ENCODE measurements at regions of chr1 and their contacts with region 1.

Region 1: DNA sequence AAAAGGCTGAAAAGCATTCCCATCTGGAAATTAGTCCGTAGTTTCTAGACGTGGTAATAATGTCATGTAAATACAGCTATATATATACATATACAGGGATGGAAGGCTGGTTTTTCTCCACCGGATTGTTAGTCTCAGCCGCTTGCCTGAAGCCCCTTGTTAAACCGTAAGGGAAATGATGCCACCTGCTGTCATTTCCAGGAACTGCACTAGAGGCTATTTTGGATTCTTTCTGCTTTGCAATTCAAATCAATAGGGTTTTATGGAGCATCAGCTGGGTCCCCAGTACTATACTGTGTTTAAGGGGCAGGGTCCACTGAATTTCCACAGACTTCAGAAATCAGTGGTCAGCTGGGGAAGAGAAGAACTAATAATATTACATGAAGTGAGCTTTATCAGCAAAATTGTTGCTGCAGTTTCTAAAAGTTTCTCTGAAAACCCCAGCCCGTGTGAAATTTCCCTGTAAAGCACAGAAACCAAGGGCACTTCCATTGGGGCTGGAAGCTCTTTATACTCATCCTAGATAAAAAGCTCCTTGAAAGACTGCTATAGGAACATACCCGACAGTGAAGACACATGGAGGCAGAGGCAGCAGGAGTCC is 33.8 kb upstream of the MPZL1 start:
- DNase-seq: no peak
- ATAC-seq: peak; percentile 83
- H3K4me3 Mint-ChIP-seq: no peak overlapping the region
- H3K27ac Mint-ChIP-seq: peak overlapping the region; percentile 46
- H3K4me1 Mint-ChIP-seq: peaks cover 45% of the 10 kb centered on the region
- H3K27me3 Mint-ChIP-seq: no peaks in the 10 kb centered on the region
- CTCF ChIP-seq: peak; percentile 81

Region 2: DNA sequence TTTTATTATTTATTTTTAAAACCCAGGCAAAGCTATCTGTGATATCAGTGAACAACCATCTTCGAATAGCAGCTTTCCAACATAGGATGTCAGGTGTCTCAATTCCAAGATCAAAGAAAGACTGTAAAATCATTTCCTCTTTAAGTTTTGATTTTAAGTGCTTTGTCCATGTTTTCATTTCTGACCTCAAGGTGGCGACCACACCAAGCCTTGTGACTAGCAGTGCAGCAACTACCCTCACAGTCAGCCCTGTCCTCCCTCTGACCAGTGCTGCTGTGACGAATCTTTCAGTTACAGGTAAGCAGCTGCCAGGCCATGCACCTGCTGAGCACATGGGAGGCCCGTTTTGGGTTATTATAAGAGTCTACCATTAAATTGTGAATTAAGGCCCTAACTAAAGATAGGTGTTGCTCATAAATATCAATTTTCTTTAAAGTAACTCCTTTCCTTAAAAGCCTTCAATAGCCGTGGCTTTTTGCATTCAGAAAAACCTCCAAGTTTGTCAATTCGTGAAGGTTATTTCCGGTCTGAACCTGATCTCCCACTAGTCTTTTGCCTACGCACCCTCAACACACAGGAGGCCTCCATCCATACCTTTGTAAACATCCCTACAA is 286.7 kb before region 1 on chr1:
- CTCF ChIA-PET with region 1: interaction called, 5 read pairs
- POLR2A ChIA-PET with region 1: no interaction called
- intact Hi-C with region 1: loop called (anchors 2 kb)
- DNase-seq: peak; percentile 26
- ATAC-seq: peak; percentile 68
- H3K4me3 Mint-ChIP-seq: no peak overlapping the region
- H3K27ac Mint-ChIP-seq: no peak overlapping the region
- H3K4me1 Mint-ChIP-seq: no peaks in the 10 kb centered on the region
- H3K27me3 Mint-ChIP-seq: no peaks in the 10 kb centered on the region
- CTCF ChIP-seq: peak; percentile 12

Region 3: DNA sequence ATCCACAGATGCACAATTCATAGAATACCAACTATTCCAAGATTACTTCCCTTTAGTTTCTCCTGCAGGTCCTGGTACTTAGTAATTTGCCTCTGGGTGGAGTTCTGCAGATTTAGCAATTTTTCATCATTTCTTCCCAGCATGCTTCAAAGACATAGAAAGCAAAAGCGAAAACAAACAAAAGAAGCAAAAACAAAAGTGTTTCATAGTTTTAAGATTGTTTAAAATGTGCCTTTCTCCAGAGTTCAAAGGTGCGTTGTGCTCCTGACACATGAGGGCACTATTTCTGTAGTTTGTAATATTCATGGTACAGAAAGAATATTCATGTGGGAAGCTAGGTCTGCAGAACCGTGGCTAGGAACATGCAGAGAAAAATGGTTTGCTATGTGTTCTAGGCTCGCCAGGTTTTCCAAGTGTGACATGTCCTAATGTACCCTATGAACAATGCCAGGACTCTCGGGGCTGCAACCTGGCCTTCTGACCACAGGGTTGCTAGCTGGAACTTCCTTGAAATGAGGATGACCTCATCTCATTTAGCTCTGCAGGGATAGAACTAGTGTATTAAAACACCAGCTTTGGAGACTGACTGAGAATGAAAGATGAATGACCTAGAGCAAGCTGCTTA is 88.0 kb before region 1 on chr1:
- CTCF ChIA-PET with region 1: interaction called, 197 read pairs
- POLR2A ChIA-PET with region 1: interaction called, 44 read pairs
- intact Hi-C with region 1: loop called (anchors 1 kb)
- DNase-seq: no peak
- ATAC-seq: peak; percentile 66
- H3K4me3 Mint-ChIP-seq: peak overlapping the region; percentile 48
- H3K27ac Mint-ChIP-seq: peak overlapping the region; percentile 7
- H3K4me1 Mint-ChIP-seq: peaks cover 43% of the 10 kb centered on the region
- H3K27me3 Mint-ChIP-seq: no peaks in the 10 kb centered on the region
- CTCF ChIP-seq: peak; percentile 56

Region 4: DNA sequence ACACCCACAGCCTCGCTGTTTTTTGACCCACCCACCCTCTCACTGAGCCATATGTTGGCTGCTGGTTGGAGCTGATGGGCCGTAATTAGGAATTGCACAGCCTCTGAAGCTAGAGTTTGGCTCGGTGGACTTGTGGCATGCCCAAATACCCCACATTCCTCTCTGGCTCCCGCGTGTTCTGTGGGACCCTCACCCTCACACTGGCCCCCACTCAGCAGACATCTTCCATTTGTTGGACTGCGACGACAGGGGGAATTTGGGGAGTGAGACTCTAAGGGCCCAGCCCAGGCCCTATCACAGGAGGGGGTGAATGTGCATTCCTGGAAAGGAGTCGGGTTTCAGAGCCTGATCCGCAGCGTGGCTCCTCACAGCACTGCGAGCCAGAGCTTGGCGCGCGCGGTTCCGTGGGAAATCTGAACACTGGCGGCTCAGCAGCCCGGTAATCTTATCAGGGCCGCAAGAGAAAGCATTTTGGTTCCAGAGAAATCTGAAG is 52.8 kb before region 1 on chr1:
- CTCF ChIA-PET with region 1: interaction called, 28 read pairs
- POLR2A ChIA-PET with region 1: interaction called, 12 read pairs
- intact Hi-C with region 1: loop called (anchors 1 kb)
- DNase-seq: no peak
- ATAC-seq: no peak
- H3K4me3 Mint-ChIP-seq: no peak overlapping the region
- H3K27ac Mint-ChIP-seq: peak overlapping the region; percentile 77
- H3K4me1 Mint-ChIP-seq: peaks cover 89% of the 10 kb centered on the region
- H3K27me3 Mint-ChIP-seq: no peaks in the 10 kb centered on the region
- CTCF ChIP-seq: no peak

Region 5: DNA sequence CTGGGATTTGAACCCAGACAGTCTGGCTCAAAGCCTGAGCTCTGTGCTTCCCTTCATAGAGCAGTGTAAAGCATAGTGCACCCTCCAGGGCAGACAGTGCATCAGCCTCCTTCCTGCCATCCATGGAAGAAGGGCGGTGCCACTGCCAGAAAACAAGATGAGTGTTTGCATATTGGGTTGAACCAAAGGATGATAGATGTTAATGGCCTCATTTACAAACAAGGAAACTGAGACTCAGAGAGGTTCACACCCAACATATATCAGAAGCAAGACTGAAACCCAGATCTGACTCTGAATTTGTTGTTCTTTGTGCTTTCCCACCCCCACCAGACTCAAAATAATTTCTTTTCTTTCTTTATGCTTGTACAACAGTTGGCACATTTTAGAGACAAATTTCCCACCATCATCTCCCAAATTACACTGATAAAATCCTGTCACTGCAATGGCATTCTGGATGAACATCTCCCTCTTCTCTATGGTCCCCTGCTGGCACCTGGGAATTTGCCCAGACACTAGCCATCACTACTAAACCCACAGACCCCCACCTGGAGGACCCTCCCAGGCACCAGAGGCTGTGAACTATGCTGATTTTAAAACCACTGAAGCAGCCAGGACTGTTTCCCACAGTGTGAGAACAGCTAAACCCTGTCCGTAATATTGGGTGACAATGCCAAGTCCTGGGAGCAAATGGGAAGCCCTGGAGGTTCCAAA is 11.7 kb before region 1 on chr1:
- CTCF ChIA-PET with region 1: interaction called, 27 read pairs
- POLR2A ChIA-PET with region 1: interaction called, 3 read pairs
- intact Hi-C with region 1: no loop called
- DNase-seq: no peak
- ATAC-seq: no peak
- H3K4me3 Mint-ChIP-seq: peak overlapping the region; percentile 2
- H3K27ac Mint-ChIP-seq: peak overlapping the region; percentile 86
- H3K4me1 Mint-ChIP-seq: peaks cover 34% of the 10 kb centered on the region
- H3K27me3 Mint-ChIP-seq: no peaks in the 10 kb centered on the region
- CTCF ChIP-seq: no peak

Region 6: DNA sequence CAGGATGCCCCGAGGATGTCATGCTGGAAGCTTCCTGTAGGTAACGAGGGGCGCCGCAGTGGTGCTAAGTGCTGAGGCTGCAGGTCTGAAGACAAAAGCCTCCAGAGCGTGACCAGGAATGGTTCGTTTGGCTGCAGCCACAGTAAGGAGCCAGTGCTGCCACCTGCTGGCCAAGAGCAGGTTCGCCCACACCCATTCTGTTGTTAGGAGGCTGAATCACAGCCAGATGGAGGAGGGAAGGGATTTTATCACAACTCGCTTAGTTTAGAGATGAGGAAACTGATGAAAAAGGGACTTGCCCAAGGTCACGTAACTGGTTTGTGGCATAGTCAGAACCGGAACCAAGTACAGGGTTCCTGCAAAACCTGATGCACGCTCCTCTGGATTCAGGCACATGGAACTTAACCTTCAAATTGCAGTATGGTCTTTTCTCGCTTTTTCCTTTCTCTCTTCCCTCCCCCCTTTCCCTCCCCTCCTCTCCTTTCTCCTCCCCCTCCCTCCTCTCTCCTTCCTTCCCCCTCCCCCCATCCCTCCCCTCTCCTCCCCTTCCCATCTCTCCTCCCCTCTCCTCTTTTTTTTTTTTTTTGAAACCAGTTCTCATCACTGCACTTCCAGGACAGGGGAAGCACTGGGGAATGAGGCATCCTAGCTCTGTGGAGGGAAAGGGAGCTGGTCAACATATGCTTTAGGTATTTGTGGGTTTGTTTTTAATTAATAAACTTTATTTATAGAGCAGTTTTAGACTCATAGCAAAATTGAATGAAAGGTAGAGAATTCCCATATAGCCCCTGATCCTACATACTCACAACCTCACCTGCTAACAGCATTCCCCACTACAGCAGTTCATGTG is 115.6 kb after region 1 on chr1:
- CTCF ChIA-PET with region 1: interaction called, 7 read pairs
- POLR2A ChIA-PET with region 1: no interaction called
- intact Hi-C with region 1: loop called (anchors 1 kb)
- DNase-seq: peak; percentile 79
- ATAC-seq: peak; percentile 100
- H3K4me3 Mint-ChIP-seq: peak overlapping the region; percentile 48
- H3K27ac Mint-ChIP-seq: no peak overlapping the region
- H3K4me1 Mint-ChIP-seq: peaks cover 22% of the 10 kb centered on the region
- H3K27me3 Mint-ChIP-seq: no peaks in the 10 kb centered on the region
- CTCF ChIP-seq: peak; percentile 54

Measured in activated B cell treated with CpG ODN at 0.5 μM for 24 hours (primary cell).